Activated CD8-positive, alpha-beta T cell treated with anti-CD3 and anti-CD28 coated beads for 36 hours (primary cell): ENCODE measurements at regions of chr7 and their contacts with region 1.

Region 1: DNA sequence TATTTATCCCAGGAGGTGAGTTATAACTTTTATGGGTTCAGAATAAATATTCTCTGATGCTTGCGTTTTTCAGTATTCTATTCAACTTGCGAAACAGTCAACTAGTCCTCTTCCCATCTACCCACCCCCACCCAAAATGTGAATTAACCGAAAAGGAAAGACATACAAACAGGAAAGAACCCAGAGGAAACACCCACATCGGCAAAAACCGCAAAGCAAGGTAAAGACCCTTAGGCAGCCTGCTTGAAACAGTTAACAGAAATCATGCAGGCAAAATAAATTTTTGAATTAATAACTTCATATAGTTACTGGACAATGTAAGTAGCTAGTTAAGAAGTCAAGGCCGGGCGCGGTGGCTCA is 5.4 kb downstream of the ZC3HAV1 start:
- DNase-seq: peak; percentile 78
- ATAC-seq: peak; percentile 2
- H3K4me3 Mint-ChIP-seq: peak overlapping the region; percentile 85
- H3K27ac Mint-ChIP-seq: peak overlapping the region; percentile 95
- H3K4me1 Mint-ChIP-seq: peaks cover 37% of the 10 kb centered on the region
- H3K27me3 Mint-ChIP-seq: no peaks in the 10 kb centered on the region
- CTCF ChIP-seq: no peak

Region 2: DNA sequence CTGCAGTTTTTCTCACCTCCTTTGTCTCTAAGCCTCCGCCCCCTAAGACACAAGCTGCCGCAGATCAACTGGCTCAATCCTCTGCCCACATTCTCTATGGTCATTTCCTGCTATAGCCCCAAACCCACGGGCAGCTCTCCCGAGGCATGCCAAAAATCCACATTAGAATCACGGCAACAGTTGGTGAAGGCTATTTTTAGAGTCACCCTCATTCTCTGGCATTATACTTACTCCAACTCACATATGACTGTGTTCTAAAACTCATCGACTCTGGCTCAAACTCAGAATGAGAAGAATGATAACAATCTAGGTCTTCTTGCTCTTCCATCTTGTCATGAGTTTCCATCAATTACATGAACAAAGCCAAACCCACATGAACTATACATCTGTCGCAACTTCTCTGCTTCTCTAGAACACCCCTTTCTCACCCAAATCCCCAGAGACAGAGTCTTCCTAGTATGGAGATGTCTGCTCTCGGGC is 112.0 kb before region 1 on chr7:
- CTCF ChIA-PET with region 1: no interaction called
- POLR2A ChIA-PET with region 1: no interaction called
- intact Hi-C with region 1: no loop called
- DNase-seq: no peak
- ATAC-seq: no peak
- H3K4me3 Mint-ChIP-seq: no peak overlapping the region
- H3K27ac Mint-ChIP-seq: no peak overlapping the region
- H3K4me1 Mint-ChIP-seq: no peaks in the 10 kb centered on the region
- H3K27me3 Mint-ChIP-seq: peaks cover 4% of the 10 kb centered on the region
- CTCF ChIP-seq: no peak

Region 3: DNA sequence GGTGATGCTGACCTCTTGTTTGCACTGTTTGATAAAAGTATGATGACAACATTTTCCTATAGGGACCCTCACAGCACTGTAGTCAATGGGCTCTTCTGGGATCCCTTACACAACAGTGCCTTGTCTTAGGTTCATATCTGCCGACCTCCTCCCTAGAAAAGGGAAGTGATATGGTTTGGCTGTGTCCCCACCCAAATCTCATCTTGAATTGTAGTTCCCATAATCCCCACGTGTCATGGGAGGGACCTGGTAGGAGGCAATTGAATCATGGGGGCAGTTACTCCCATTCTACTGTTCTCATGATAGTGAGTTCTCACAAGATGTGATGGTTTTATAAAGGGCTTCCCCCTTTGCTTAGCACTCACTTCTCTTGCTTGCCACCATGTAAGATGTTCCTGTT is 17.6 kb before region 1 on chr7:
- CTCF ChIA-PET with region 1: interaction called, 3 read pairs
- POLR2A ChIA-PET with region 1: interaction called, 71 read pairs
- intact Hi-C with region 1: no loop called
- DNase-seq: peak; percentile 34
- ATAC-seq: no peak
- H3K4me3 Mint-ChIP-seq: no peak overlapping the region
- H3K27ac Mint-ChIP-seq: peak overlapping the region; percentile 94
- H3K4me1 Mint-ChIP-seq: peaks cover 79% of the 10 kb centered on the region
- H3K27me3 Mint-ChIP-seq: no peaks in the 10 kb centered on the region
- CTCF ChIP-seq: no peak